IMR-90 (cell line): ENCODE measurements at regions of chr9 and their contacts with region 1.

Region 1: DNA sequence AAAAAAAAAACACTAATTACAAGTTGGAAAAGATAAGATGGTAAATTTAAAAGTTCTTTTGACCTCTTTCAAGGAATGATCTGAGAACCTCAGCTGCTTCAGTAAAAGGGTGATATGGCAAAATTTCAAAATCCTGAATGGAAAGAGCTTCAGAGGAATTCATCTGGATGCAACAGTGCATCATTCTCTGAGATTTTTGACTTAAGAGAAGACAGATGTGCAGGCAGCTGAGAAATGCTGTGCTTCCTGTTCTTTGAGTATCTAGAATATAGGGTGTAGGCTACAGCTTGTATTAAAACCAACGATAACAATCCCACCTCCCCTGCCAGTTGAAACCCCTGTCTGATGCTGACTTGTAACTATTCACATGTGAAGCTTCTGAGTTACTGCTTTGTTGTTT is 6.2 kb downstream of the FRMPD1 start:
- DNase-seq: no peak
- ATAC-seq: no peak
- H3K4me3 ChIP-seq: no peak overlapping the region
- H3K27ac ChIP-seq: no peak overlapping the region
- H3K4me1 ChIP-seq: no peaks in the 10 kb centered on the region
- H3K27me3 ChIP-seq: peaks cover 71% of the 10 kb centered on the region
- CTCF ChIP-seq: no peak
- POLR2A ChIP-seq: no peak
- RAD21 ChIP-seq: no peak

Region 2: DNA sequence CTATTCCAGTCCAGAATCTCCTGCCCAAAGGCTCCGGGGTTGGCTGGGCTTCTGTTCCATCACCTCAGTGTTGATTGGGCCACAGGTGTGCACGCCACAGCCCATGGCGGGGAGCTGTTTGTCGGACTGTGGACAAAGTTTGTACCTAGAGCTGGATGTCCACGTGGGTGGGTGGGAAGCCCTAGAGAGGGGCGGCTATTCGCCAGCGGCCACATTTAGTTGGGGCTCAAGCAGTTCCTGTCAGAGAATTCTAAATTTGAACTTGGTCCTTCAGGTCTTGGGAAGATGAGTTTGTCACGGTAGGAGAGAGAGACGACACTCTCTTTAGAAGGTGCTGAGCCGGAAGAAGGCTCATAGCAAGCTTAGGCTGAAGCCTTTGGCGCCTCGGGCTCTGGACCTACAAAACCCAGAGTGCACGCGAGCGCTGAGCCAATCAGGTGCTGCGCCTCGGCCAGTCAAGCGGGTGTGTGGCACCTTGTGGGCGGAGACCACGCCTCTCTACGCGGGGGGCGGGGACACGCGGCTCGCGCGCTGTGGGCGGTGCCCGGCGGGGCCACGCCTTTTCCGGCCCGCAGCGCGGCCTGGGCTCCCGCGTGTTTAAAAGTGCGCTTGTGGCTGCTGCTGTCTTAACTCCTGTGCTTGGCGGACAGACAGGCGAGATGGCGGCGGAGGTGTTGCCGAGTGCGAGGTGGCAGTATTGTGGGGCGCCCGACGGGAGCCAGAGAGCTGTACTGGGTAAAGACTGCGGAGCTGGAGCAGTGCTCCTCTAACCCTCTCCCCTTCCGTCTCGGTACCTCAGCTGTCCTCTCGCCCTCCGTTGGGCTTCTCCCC is 171.3 kb before region 1 on chr9 and contains the start of gene POLR1E:
- CTCF ChIA-PET with region 1: no interaction called
- POLR2A ChIA-PET with region 1: no interaction called
- dilution Hi-C with region 1: no loop called
- in situ Hi-C with region 1: no loop called
- intact Hi-C with region 1: no loop called
- DNase-seq: peak; percentile 89
- ATAC-seq: peak; percentile 91
- H3K4me3 ChIP-seq: peak within 1 kb of the TSS; percentile 77
- H3K27ac ChIP-seq: peak within 1 kb of the TSS; percentile 76
- H3K4me1 ChIP-seq: peaks cover 11% of the 10 kb centered on the region
- H3K27me3 ChIP-seq: peaks cover 4% of the 10 kb centered on the region; the same call in 1 of the 2 replicates
- CTCF ChIP-seq: no peak
- POLR2A ChIP-seq: peak; percentile 95
- RAD21 ChIP-seq: no peak
- total RNA-seq, gene POLR1E: 67.5 and 71.9 TPM in 2 replicates

Region 3: DNA sequence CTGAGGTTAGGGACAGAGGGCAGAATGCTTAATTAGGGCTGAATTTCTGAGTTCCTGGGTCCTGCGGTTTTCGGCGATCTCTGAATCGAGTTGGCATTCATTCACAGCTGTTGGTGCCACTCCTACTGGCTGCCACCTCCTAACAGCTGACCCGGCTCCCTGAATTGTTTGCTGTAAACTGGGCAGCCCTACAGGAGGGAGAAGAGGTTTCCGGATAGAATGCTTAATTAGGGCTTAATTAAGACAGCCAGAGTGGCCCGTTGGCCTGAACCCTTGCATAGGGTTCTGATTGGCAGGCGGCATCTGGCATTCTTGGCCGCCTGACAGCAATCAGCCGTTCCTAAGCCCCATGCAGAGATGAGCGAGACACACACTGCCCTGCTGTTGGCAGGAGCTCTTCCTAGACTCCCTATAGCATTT is 19.5 kb after region 1 on chr9:
- CTCF ChIA-PET with region 1: no interaction called
- POLR2A ChIA-PET with region 1: no interaction called
- dilution Hi-C with region 1: no loop called
- in situ Hi-C with region 1: no loop called
- intact Hi-C with region 1: no loop called
- DNase-seq: no peak
- ATAC-seq: no peak
- H3K4me3 ChIP-seq: no peak overlapping the region
- H3K27ac ChIP-seq: no peak overlapping the region
- H3K4me1 ChIP-seq: no peaks in the 10 kb centered on the region
- H3K27me3 ChIP-seq: peaks cover 44% of the 10 kb centered on the region
- CTCF ChIP-seq: no peak
- POLR2A ChIP-seq: no peak
- RAD21 ChIP-seq: no peak

Region 4: GRCh38 chr9:37706290-37706689 is 49.4 kb after region 1 on chr9:
- CTCF ChIA-PET with region 1: no interaction called
- POLR2A ChIA-PET with region 1: no interaction called
- dilution Hi-C with region 1: no loop called
- in situ Hi-C with region 1: loop called (anchors 5 kb)
- intact Hi-C with region 1: no loop called
- DNase-seq: no peak
- ATAC-seq: no peak
- H3K4me3 ChIP-seq: no peak overlapping the region
- H3K27ac ChIP-seq: no peak overlapping the region
- H3K4me1 ChIP-seq: no peaks in the 10 kb centered on the region
- H3K27me3 ChIP-seq: peaks cover 34% of the 10 kb centered on the region
- CTCF ChIP-seq: no peak
- POLR2A ChIP-seq: no peak
- RAD21 ChIP-seq: no peak

Region 5: DNA sequence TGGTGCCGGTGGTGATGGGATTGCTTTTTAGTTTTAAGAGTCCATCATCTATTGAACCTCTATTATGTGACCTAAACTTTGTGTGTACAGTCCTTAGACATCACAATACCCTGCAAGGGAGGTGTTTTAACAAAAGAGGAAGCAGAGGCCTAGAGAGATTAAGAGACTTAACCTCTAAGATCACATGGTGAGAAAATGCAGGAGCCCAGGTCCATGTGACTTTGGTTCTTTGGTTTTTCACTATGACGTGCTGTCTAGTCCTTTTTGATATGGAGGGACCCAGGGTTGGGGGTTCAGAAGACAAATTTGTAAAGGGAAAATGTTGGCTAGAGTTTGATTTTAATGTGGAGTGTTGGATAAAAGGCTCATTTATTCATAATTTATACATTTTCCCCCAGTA is 62.6 kb after region 1 on chr9:
- CTCF ChIA-PET with region 1: no interaction called
- POLR2A ChIA-PET with region 1: no interaction called
- dilution Hi-C with region 1: no loop called
- in situ Hi-C with region 1: no loop called
- intact Hi-C with region 1: no loop called
- DNase-seq: no peak
- ATAC-seq: no peak
- H3K4me3 ChIP-seq: no peak overlapping the region
- H3K27ac ChIP-seq: no peak overlapping the region
- H3K4me1 ChIP-seq: no peaks in the 10 kb centered on the region
- H3K27me3 ChIP-seq: peaks cover 24% of the 10 kb centered on the region
- CTCF ChIP-seq: no peak
- POLR2A ChIP-seq: no peak
- RAD21 ChIP-seq: no peak

Region 6: GRCh38 chr9:38756702-38757101 is 1099.8 kb after region 1 on chr9:
- CTCF ChIA-PET with region 1: no interaction called
- POLR2A ChIA-PET with region 1: no interaction called
- dilution Hi-C with region 1: no loop called
- in situ Hi-C with region 1: no loop called
- intact Hi-C with region 1: no loop called
- DNase-seq: no peak
- ATAC-seq: no peak
- H3K4me3 ChIP-seq: no peak overlapping the region
- H3K27ac ChIP-seq: no peak overlapping the region
- H3K4me1 ChIP-seq: no peaks in the 10 kb centered on the region
- H3K27me3 ChIP-seq: no peaks in the 10 kb centered on the region
- CTCF ChIP-seq: no peak
- POLR2A ChIP-seq: no peak
- RAD21 ChIP-seq: no peak